CD14-positive monocyte (primary cell): ENCODE measurements at regions of chrX and their contacts with region 1.

Region 1: DNA sequence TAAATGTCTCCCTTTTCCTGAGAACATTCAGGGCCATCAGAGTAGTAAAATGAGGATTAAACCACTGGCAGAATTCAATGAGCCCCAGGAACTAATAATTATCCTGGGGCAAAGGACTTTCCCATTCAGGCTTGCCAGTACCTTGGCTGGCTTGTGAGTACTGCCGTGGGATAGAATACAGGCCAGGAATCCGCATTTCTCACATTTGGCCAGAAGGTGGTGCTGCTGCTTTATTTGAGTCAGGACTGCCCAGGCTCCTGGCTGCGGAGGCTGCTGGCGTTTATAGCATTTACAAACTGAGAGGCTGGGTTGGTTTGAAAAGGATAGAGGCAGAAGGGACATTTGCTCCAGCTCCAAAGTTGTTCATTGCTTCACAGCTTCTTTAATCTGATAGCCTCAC is 91.4 kb downstream of the RTL9 start:
- DNase-seq: peak; percentile 18 to 34 (median 22)
- H3K4me3 ChIP-seq: no peak overlapping the region
- H3K4me3 Mint-ChIP-seq: no peak overlapping the region
- H3K27ac ChIP-seq: no peak overlapping the region
- H3K27ac Mint-ChIP-seq: no peak overlapping the region
- H3K4me1 ChIP-seq: no peaks in the 10 kb centered on the region
- H3K4me1 Mint-ChIP-seq: no peaks in the 10 kb centered on the region
- H3K27me3 ChIP-seq: peaks cover 0 to 8% of the 10 kb centered on the region in 2 donors
- H3K27me3 Mint-ChIP-seq: peaks cover 7 to 17% (median 12%) of the 10 kb centered on the region in 3 donors
- CTCF ChIP-seq: peak; percentile 58

Region 2: DNA sequence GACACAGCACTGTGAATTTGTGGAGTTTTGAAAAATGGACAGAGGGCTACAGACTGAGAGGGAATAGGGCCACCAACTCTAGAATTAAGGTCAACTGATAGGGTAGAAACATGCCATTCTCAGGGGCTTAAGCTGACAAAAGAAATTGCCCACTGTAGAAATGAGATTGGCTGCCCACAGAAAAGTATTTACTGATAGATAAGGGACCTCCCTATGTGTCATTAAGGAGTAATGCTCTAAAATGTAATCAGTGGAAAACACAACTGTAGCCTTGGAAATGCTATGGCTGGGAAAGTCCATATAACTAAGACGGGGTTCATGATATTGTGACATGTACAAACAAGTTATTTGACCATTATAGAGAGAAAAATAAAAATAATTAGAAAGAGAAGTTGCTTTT is 86.8 kb before region 1 on chrX:
- intact Hi-C with region 1: no loop called
- DNase-seq: no peak
- H3K4me3 ChIP-seq: no peak overlapping the region
- H3K4me3 Mint-ChIP-seq: no peak overlapping the region
- H3K27ac ChIP-seq: no peak overlapping the region
- H3K27ac Mint-ChIP-seq: peak overlapping the region in 1 of 7 donors; percentile 61
- H3K4me1 ChIP-seq: no peaks in the 10 kb centered on the region
- H3K4me1 Mint-ChIP-seq: no peaks in the 10 kb centered on the region
- H3K27me3 ChIP-seq: peaks cover 0 to 3% of the 10 kb centered on the region in 2 donors
- H3K27me3 Mint-ChIP-seq: no peaks in the 10 kb centered on the region
- CTCF ChIP-seq: no peak

Region 3: GRCh38 chrX:110383414-110383813 is 66.6 kb before region 1 on chrX:
- intact Hi-C with region 1: no loop called
- DNase-seq: no peak
- H3K4me3 ChIP-seq: no peak overlapping the region
- H3K4me3 Mint-ChIP-seq: no peak overlapping the region
- H3K27ac ChIP-seq: no peak overlapping the region
- H3K27ac Mint-ChIP-seq: no peak overlapping the region
- H3K4me1 ChIP-seq: no peaks in the 10 kb centered on the region
- H3K4me1 Mint-ChIP-seq: no peaks in the 10 kb centered on the region
- H3K27me3 ChIP-seq: peaks cover 0 to 4% of the 10 kb centered on the region in 2 donors
- H3K27me3 Mint-ChIP-seq: peaks cover 4 to 8% (median 4%) of the 10 kb centered on the region in 3 donors
- CTCF ChIP-seq: no peak

Region 4: GRCh38 chrX:110407910-110408545 is 42.0 kb before region 1 on chrX:
- intact Hi-C with region 1: no loop called
- DNase-seq: peak; percentile 15 to 45 (median 35)
- H3K4me3 ChIP-seq: no peak overlapping the region
- H3K4me3 Mint-ChIP-seq: no peak overlapping the region
- H3K27ac ChIP-seq: no peak overlapping the region
- H3K27ac Mint-ChIP-seq: no peak overlapping the region
- H3K4me1 ChIP-seq: no peaks in the 10 kb centered on the region
- H3K4me1 Mint-ChIP-seq: peaks cover 3% of the 10 kb centered on the region
- H3K27me3 ChIP-seq: no peaks in the 10 kb centered on the region
- H3K27me3 Mint-ChIP-seq: peaks cover 0 to 11% (median 0%) of the 10 kb centered on the region in 3 donors
- CTCF ChIP-seq: peak; percentile 73

Region 5: GRCh38 chrX:110847334-110847733 is 397.3 kb after region 1 on chrX:
- intact Hi-C with region 1: loop called (anchors 2 kb)
- DNase-seq: peak; percentile 15 to 34 (median 25)
- H3K4me3 ChIP-seq: no peak overlapping the region
- H3K4me3 Mint-ChIP-seq: no peak overlapping the region
- H3K27ac ChIP-seq: no peak overlapping the region
- H3K27ac Mint-ChIP-seq: no peak overlapping the region
- H3K4me1 ChIP-seq: no peaks in the 10 kb centered on the region
- H3K4me1 Mint-ChIP-seq: no peaks in the 10 kb centered on the region
- H3K27me3 ChIP-seq: no peaks in the 10 kb centered on the region
- H3K27me3 Mint-ChIP-seq: peaks cover 0 to 3% (median 3%) of the 10 kb centered on the region in 3 donors
- CTCF ChIP-seq: peak; percentile 59